RWPE1 (cell line): ENCODE measurements at regions of chr19 and their contacts with region 1.

Region 1: GRCh38 chr19:10936661-10937084 is 8.1 kb downstream of the TIMM29 start:
- DNase-seq: peak; percentile 66
- H3K27ac ChIP-seq: peak overlapping the region; percentile 55
- CTCF ChIP-seq: peak; percentile 79

Region 2: DNA sequence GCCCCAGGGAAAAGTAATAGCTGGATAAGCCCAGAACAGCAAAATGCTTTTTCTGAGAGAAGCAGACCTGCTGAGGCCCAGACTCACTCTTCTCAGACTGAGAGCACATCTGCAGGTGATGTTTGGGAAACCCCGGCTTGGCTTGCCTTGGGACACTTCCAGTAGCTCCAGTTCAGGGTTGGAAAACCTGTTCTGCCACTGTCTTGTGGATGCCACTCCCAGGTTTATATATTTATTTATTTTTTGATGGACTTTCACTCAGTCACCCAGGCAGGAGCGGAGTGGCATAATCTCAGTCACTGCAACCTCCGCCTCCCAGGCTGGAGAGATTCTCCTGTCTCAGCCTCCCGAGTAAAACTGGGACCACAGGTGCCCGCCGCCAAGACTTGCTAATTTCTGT is 16.1 kb after region 1 on chr19:
- CTCF ChIA-PET with region 1: interaction called, 19 read pairs
- POLR2A ChIA-PET with region 1: interaction called, 7 read pairs
- DNase-seq: peak; percentile 56
- H3K27ac ChIP-seq: peak overlapping the region; percentile 57
- CTCF ChIP-seq: no peak

Region 3: DNA sequence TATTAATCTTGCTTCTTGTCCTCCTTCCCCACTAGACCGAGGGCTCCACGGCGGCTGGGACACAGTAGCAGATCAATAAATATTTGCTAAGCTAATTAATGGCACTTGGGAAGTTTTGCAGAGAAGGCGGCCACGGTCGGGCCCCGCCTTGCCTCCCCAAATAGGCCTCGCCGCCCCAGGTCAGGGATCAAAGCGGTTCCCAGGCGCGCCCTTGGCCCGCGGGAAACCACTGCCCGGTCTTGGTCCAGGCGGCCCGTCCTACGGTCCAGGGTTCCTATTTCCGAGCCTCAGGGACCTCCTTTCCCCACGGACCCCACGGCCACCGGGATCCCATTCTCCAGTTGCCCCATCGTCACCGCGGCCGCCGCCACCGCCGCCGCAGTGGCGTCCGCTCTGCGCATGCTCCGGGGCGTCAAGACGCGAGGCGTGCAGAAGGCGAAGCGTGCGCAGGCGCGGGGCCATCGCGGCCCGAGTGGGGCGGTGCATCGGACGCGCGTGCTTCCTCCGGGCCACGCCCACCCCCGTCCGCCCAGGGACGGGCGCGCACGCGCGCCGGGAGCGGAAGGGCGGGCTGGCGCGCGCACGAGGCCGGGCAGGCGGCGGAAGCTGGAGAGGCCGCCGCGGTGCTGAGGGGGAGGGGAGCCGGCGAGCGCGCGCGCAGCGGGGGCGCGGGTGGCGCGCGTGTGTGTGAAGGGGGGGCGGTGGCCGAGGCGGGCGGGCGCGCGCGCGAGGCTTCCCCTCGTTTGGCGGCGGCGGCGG is 23.8 kb after region 1 on chr19 and contains the start of gene SMARCA4:
- CTCF ChIA-PET with region 1: interaction called, 10 read pairs
- POLR2A ChIA-PET with region 1: interaction called, 3 read pairs
- DNase-seq: peak; percentile 99
- H3K27ac ChIP-seq: peak within 1 kb of the TSS; percentile 90
- CTCF ChIP-seq: no peak

Region 4: DNA sequence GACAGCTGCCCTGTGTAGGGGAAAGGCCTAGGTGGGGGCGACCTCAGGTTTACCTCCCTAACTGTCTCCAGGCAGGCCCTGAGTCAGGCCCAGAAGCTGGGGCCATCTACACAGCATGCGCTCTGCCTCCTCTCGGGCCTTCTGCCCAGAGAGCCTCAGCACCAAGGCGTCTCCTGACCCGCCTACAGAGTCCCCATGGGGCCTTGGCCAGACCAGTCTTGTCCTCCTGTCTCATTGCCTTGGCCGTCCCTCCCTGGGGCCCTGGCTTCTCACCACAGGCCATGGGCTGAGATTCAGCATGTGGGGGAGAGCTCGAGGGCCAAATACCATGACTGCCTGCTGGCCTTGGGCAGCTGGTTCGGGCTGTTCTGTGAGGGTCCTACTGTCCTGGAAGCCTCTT is 83.2 kb after region 1 on chr19:
- CTCF ChIA-PET with region 1: interaction called, 10 read pairs
- POLR2A ChIA-PET with region 1: no interaction called
- DNase-seq: no peak
- H3K27ac ChIP-seq: no peak overlapping the region
- CTCF ChIP-seq: no peak

Region 5: GRCh38 chr19:11106477-11106876 is 169.8 kb after region 1 on chr19:
- CTCF ChIA-PET with region 1: no interaction called
- POLR2A ChIA-PET with region 1: no interaction called
- DNase-seq: no peak
- H3K27ac ChIP-seq: peak overlapping the region; percentile 80
- CTCF ChIP-seq: no peak